Cardiac septum (tissue), 1 donor: ENCODE measurements at regions of chrX and their contacts with region 1.

Region 1: GRCh38 chrX:14095702-14096101 is 66.0 kb upstream of the GEMIN8 start:
- DNase-seq: no peak

Region 2: DNA sequence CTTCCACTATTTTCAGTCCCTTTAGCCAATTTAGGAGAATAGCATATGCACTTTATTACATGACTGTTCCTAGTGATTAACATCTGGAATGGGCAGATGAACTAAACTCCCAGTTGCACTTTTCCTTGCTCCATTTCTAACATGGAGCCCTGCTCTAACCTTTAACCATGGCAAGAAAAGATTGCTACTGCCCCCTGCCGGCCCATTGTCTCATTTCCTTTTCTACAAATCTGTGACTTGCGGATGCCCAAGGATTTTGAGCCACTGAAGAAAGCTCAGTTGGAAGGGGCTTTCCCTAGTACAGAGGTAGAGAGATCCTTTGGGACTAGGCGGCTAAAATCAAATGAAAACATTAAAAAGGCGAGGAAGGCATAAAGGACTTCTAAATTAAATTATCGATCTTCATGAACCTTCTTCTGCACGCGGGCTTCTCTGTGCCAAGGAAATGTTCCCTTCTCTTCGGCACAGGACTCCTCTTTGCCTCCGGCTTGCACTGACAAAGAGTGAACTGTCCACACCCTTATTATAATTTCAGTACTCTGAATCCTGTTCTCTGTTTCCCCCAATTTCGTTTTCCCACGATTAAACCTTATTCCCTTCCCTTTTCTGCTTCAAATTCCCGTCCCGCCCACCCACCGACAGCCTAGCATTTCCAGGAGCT is 433.1 kb after region 1 on chrX:
- intact Hi-C with region 1: loop called (anchors 10 kb)
- DNase-seq: no peak